Lower leg skin (tissue), 4 donors: ENCODE measurements at regions of chr12 and their contacts with region 1.

Region 1: GRCh38 chr12:112096667-112097066 is 11.9 kb downstream of the NAA25 start:
- DNase-seq: no peak
- H3K4me3 ChIP-seq: no peak overlapping the region
- CTCF ChIP-seq: no peak
- POLR2A ChIP-seq: no peak

Region 2: DNA sequence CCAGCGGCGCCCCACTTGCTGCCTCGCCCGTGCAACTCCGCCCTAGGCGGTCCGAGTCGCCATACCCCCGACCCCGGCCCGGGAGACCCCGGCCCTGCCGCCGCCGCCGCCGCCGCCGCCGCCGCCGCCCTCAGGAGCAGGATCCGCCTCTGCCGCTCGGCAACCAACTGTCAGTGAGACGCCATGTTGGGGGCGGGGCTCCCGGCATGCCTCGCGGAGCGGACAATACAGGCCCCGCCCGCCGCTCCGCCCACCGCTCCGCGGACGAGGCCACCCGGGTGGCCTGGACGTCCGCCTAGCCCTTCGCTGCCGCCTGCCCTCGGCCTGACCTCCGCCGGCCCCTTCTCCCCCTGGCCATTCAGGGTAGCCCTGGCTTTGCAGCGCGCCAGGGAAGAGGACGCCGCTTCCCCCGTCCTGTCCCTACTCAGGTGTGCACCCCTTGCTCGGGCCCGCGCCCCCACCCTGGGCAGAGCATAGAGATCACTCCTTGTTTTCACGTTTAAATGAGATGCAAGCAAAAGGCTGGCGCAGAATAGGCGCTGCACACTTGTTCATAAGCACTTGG is 285.6 kb after region 1 on chr12 and contains the start of gene HECTD4:
- intact Hi-C with region 1: loop called (anchors 10 kb)
- DNase-seq: peak; percentile 92 to 99
- H3K4me3 ChIP-seq: peak within 1 kb of the TSS; percentile 87
- CTCF ChIP-seq: no peak
- POLR2A ChIP-seq: no peak
- total RNA-seq, gene HECTD4: 33.2 to 70.6 (median 35.5) TPM